Activated CD4-positive, alpha-beta T cell treated with anti-CD3 and anti-CD28 coated beads for 36 hours (primary cell): ENCODE measurements at regions of chr17 and their contacts with region 1.

Region 1: GRCh38 chr17:65137021-65137991 is at the start of gene RGS9:
- DNase-seq: peak; percentile 89
- ATAC-seq: peak; percentile 95
- H3K4me3 Mint-ChIP-seq: peak within 1 kb of the TSS; percentile 42
- H3K27ac Mint-ChIP-seq: peak within 1 kb of the TSS; percentile 62
- H3K4me1 Mint-ChIP-seq: peaks cover 14% of the 10 kb centered on the region
- H3K27me3 Mint-ChIP-seq: peaks cover 10% of the 10 kb centered on the region
- total RNA-seq, gene RGS9: 1.6 to 1.8 TPM

Region 2: GRCh38 chr17:64781014-64781753 is 356.1 kb before region 1 on chr17:
- CTCF ChIA-PET with region 1: no interaction called
- POLR2A ChIA-PET with region 1: no interaction called
- intact Hi-C with region 1: loop called in 1 of 2 experiments (anchors 1 kb)
- DNase-seq: peak; percentile 71
- ATAC-seq: peak; percentile 28
- H3K4me3 Mint-ChIP-seq: peak overlapping the region; percentile 64
- H3K27ac Mint-ChIP-seq: no peak overlapping the region
- H3K4me1 Mint-ChIP-seq: peaks cover 34% of the 10 kb centered on the region
- H3K27me3 Mint-ChIP-seq: peaks cover 19% of the 10 kb centered on the region

Region 3: GRCh38 chr17:64920026-64920418 is 217.3 kb before region 1 on chr17:
- CTCF ChIA-PET with region 1: interaction called, 3 read pairs
- POLR2A ChIA-PET with region 1: no interaction called
- intact Hi-C with region 1: loop called in 1 of 2 experiments (anchors 5 kb)
- DNase-seq: no peak
- ATAC-seq: no peak
- H3K4me3 Mint-ChIP-seq: peak overlapping the region; percentile 73
- H3K27ac Mint-ChIP-seq: peak overlapping the region; percentile 70
- H3K4me1 Mint-ChIP-seq: peaks cover 7% of the 10 kb centered on the region
- H3K27me3 Mint-ChIP-seq: no peaks in the 10 kb centered on the region

Region 4: DNA sequence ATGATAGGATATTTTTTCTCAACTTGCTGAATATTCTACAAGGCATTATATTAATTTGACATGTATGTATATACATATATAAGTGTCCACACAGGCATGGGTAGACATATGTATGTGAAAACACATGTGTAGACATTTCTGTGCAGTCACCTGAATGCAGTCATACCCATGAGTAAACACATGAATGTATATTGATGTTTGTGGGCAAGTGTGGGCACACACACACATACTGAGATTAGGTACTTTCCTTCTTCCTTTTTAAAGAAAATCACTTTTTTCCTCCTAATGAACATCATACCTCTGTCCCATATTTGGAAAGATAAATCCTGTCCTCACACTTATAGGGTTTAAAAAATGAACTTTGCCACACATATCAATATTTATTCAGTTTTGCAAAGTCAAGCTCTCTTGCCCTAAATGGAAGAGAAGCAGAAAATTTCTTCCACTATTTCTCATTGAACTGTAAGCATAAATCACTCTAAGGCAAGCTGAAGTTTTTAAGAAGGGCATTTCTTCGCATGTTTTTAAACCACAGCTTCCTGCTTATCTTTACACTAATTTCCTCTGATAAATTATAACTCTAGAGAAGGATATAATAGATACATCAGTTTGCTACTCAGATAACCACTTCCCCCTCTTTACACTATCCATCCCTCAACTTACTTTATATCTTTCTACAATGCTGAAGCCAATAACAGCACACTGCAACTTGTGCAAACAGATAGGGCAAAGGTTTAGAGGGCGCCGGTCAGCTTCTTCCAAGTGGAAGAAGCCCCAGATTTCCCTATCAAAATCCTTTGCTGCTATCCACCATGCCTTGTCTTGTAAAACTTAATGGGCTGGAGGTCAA is 168.4 kb before region 1 on chr17:
- CTCF ChIA-PET with region 1: no interaction called
- POLR2A ChIA-PET with region 1: no interaction called
- intact Hi-C with region 1: loop called in 1 of 2 experiments (anchors 1 kb)
- DNase-seq: peak; percentile 46
- ATAC-seq: peak; percentile 70
- H3K4me3 Mint-ChIP-seq: no peak overlapping the region
- H3K27ac Mint-ChIP-seq: peak overlapping the region; percentile 39
- H3K4me1 Mint-ChIP-seq: peaks cover 72% of the 10 kb centered on the region
- H3K27me3 Mint-ChIP-seq: no peaks in the 10 kb centered on the region

Region 5: GRCh38 chr17:65181237-65182061 is 44.1 kb after region 1 on chr17:
- CTCF ChIA-PET with region 1: interaction called, 11 read pairs
- POLR2A ChIA-PET with region 1: interaction called, 5 read pairs
- intact Hi-C with region 1: no loop called
- DNase-seq: peak; percentile 71
- ATAC-seq: peak; percentile 77
- H3K4me3 Mint-ChIP-seq: no peak overlapping the region
- H3K27ac Mint-ChIP-seq: peak overlapping the region; percentile 75
- H3K4me1 Mint-ChIP-seq: peaks cover 54% of the 10 kb centered on the region
- H3K27me3 Mint-ChIP-seq: peaks cover 9% of the 10 kb centered on the region

Region 6: GRCh38 chr17:65198653-65199382 is 61.5 kb after region 1 on chr17:
- CTCF ChIA-PET with region 1: interaction called, 16 read pairs
- POLR2A ChIA-PET with region 1: no interaction called
- intact Hi-C with region 1: loop called (anchors 1 kb)
- DNase-seq: no peak
- ATAC-seq: peak; percentile 70
- H3K4me3 Mint-ChIP-seq: no peak overlapping the region
- H3K27ac Mint-ChIP-seq: no peak overlapping the region
- H3K4me1 Mint-ChIP-seq: peaks cover 15% of the 10 kb centered on the region
- H3K27me3 Mint-ChIP-seq: no peaks in the 10 kb centered on the region